PC-9 (cell line): ENCODE measurements at regions of chr15 and their contacts with region 1.

Region 1: GRCh38 chr15:52331490-52332240 is 36.1 kb upstream of the MYO5C start:
- DNase-seq: peak; percentile 69 to 86
- H3K4me3 ChIP-seq: no peak overlapping the region
- H3K27ac ChIP-seq: no peak overlapping the region
- H3K4me1 ChIP-seq: peaks cover 17% of the 10 kb centered on the region
- H3K27me3 ChIP-seq: no peaks in the 10 kb centered on the region
- CTCF ChIP-seq: peak; percentile 58

Region 2: GRCh38 chr15:52261498-52262242 is 70.0 kb before region 1 on chr15:
- CTCF ChIA-PET with region 1: interaction called, 3 read pairs
- POLR2A ChIA-PET with region 1: no interaction called
- intact Hi-C with region 1: loop called (anchors 1 kb)
- DNase-seq: peak; percentile 90 to 95
- H3K4me3 ChIP-seq: 0 out of 2 replicates have a peak overlapping the region, but pooled peaks have one; percentile 17
- H3K27ac ChIP-seq: peak overlapping the region; percentile 95
- H3K4me1 ChIP-seq: peaks cover 26% of the 10 kb centered on the region
- H3K27me3 ChIP-seq: no peaks in the 10 kb centered on the region
- CTCF ChIP-seq: 0 out of 2 replicates have a peak, but pooled peaks have one; percentile 26

Region 3: DNA sequence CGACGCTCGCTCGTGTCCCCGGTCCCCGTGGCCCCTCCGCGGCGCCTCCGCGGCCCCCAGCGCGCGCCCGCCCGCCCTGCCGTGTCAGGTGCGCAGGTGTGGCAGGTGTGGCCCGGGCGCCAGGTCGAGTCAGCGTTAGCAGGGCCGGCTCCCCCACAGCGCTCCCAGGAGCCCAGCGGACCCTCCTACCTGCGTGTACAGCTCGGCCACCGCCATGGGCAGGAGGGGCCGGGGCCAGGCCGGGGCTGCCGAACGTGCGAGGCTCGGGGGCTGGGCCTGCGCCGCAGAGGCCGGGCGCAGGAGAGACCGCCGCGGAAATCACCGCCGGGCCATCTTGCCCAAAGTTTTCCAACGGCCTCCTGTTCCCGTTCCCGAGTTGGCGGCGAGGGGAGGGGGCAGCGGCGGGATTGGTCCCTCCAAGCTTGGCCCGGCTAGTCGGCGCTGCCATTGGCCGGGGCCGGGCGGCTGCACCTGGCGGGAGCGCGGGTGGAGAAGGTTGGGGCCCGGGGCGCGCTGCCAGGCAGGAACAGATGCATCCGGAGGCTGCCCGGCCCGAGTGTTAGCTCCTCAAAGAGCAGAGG is 36.2 kb before region 1 on chr15 and contains the start of gene MYO5C:
- CTCF ChIA-PET with region 1: no interaction called
- POLR2A ChIA-PET with region 1: no interaction called
- intact Hi-C with region 1: no loop called
- DNase-seq: peak; percentile 69 to 90
- H3K4me3 ChIP-seq: peak within 1 kb of the TSS; percentile 86
- H3K27ac ChIP-seq: peak within 1 kb of the TSS; percentile 24; the same call in 1 of the 2 replicates
- H3K4me1 ChIP-seq: peaks cover 19% of the 10 kb centered on the region
- H3K27me3 ChIP-seq: no peaks in the 10 kb centered on the region
- CTCF ChIP-seq: no peak
- total RNA-seq, gene MYO5C: 35.6 and 41.1 TPM in 2 replicates

Region 4: GRCh38 chr15:52392008-52392687 is 60.5 kb after region 1 on chr15:
- CTCF ChIA-PET with region 1: no interaction called
- POLR2A ChIA-PET with region 1: interaction called, 17 read pairs
- intact Hi-C with region 1: no loop called
- DNase-seq: peak; percentile 17 to 66
- H3K4me3 ChIP-seq: no peak overlapping the region
- H3K27ac ChIP-seq: no peak overlapping the region
- H3K4me1 ChIP-seq: 0 out of 2 replicates have a peak, but pooled peaks cover 7% of the 10 kb centered on the region
- H3K27me3 ChIP-seq: no peaks in the 10 kb centered on the region
- CTCF ChIP-seq: no peak

Region 5: GRCh38 chr15:52528991-52529926 is 197.6 kb after region 1 on chr15:
- CTCF ChIA-PET with region 1: no interaction called
- POLR2A ChIA-PET with region 1: no interaction called
- intact Hi-C with region 1: loop called (anchors 5 kb)
- DNase-seq: peak in 1 of 2 experiments; percentile 62
- H3K4me3 ChIP-seq: peak overlapping the region; percentile 68; the same call in 1 of the 2 replicates
- H3K27ac ChIP-seq: no peak overlapping the region
- H3K4me1 ChIP-seq: no peaks in the 10 kb centered on the region
- H3K27me3 ChIP-seq: no peaks in the 10 kb centered on the region
- CTCF ChIP-seq: no peak

Region 6: GRCh38 chr15:52584414-52584813 is 252.7 kb after region 1 on chr15:
- CTCF ChIA-PET with region 1: no interaction called
- POLR2A ChIA-PET with region 1: no interaction called
- intact Hi-C with region 1: no loop called
- DNase-seq: no peak
- H3K4me3 ChIP-seq: no peak overlapping the region
- H3K27ac ChIP-seq: no peak overlapping the region
- H3K4me1 ChIP-seq: no peaks in the 10 kb centered on the region
- H3K27me3 ChIP-seq: no peaks in the 10 kb centered on the region
- CTCF ChIP-seq: no peak

Region 7: GRCh38 chr15:52679232-52680040 is 347.8 kb after region 1 on chr15 and contains the start of gene ATOSA:
- CTCF ChIA-PET with region 1: no interaction called
- POLR2A ChIA-PET with region 1: interaction called, 5 read pairs
- intact Hi-C with region 1: loop called (anchors 1 kb)
- DNase-seq: peak; percentile 76 to 91
- H3K4me3 ChIP-seq: peak within 1 kb of the TSS; percentile 89
- H3K27ac ChIP-seq: peak within 1 kb of the TSS; percentile 60
- H3K4me1 ChIP-seq: peaks cover 54% of the 10 kb centered on the region
- H3K27me3 ChIP-seq: no peaks in the 10 kb centered on the region
- CTCF ChIP-seq: no peak
- total RNA-seq, gene ATOSA: 30.4 and 35.7 TPM in 2 replicates